ENCODE measurements at regions of chr9 and their contacts with region 1.

Region 1: GRCh38 chr9:129428864-129429590 is 191.9 kb downstream of the C9orf50 start:
- DNase-seq: no peak
- H3K4me3 ChIP-seq: no peak overlapping the region
- H3K27ac ChIP-seq: peak overlapping the region in 1 of 2 experiments; percentile 62; a peak in 2 of 4 replicates
- H3K4me1 ChIP-seq: peaks cover 0 to 44% of the 10 kb centered on the region in 2 experiments; a peak in 1 of 4 replicates
- H3K27me3 ChIP-seq: no peaks in the 10 kb centered on the region
- CTCF ChIP-seq: no peak
- EP300 ChIP-seq: no peak
- RAD21 ChIP-seq: no peak

Region 2: GRCh38 chr9:129414377-129414992 is 14.5 kb before region 1 on chr9:
- CTCF ChIA-PET with region 1: interaction called, 10 read pairs
- POLR2A ChIA-PET with region 1: interaction called, 11 read pairs
- DNase-seq: no peak
- H3K4me3 ChIP-seq: peak overlapping the region; percentile 29 to 34; a peak in 2 of 4 replicates
- H3K27ac ChIP-seq: peak overlapping the region; percentile 97 to 99
- H3K4me1 ChIP-seq: peaks cover 21 to 58% of the 10 kb centered on the region in 2 experiments; a peak in 3 of 4 replicates
- H3K27me3 ChIP-seq: no peaks in the 10 kb centered on the region
- CTCF ChIP-seq: no peak
- EP300 ChIP-seq: no peak
- RAD21 ChIP-seq: no peak

Region 3: GRCh38 chr9:129482521-129483414 is 53.7 kb after region 1 on chr9:
- CTCF ChIA-PET with region 1: interaction called, 12 read pairs
- POLR2A ChIA-PET with region 1: interaction called, 5 read pairs
- DNase-seq: peak; percentile 90
- H3K4me3 ChIP-seq: peak overlapping the region; percentile 37 to 51; a peak in 3 of 4 replicates
- H3K27ac ChIP-seq: peak overlapping the region; percentile 97 to 100
- H3K4me1 ChIP-seq: peaks cover 55 to 78% of the 10 kb centered on the region in 2 experiments; a peak in 3 of 4 replicates
- H3K27me3 ChIP-seq: no peaks in the 10 kb centered on the region
- CTCF ChIP-seq: no peak
- EP300 ChIP-seq: peak in 1 of 2 experiments; percentile 53; a peak in 1 of 4 replicates
- RAD21 ChIP-seq: peak; percentile 35

Measured in SK-N-SH (cell line).